Right ventricle myocardium inferior (tissue), 1 donor: ENCODE measurements at regions of chr11 and their contacts with region 1.

Region 1: GRCh38 chr11:12019337-12019736 is 10.9 kb upstream of the DKK3 start:
- DNase-seq: no peak
- ATAC-seq: peak; percentile 37

Region 2: DNA sequence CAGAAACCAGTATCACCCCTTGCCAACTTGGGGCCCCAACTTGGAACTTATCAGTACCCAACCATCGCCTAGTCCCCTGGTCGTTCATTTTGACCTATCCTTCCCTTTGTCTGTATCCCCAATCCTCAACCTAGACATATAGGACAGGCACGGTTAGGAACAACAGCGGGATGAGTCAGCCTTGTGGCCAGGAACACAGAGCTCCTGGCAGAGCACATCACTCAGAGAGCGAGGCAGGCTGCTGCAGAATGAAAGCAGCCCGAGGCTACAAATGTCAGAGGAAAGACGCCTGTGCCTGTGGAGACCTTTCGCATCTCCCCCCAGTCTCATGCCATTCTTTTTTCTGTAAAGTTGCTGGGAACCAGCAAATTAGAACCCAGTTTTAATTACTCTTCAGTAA is 25.5 kb before region 1 on chr11:
- intact Hi-C with region 1: loop called (anchors 1 kb)
- DNase-seq: no peak
- ATAC-seq: peak; percentile 76